A549 (cell line): ENCODE measurements at regions of chr10 and their contacts with region 1.

Region 1: GRCh38 chr10:93816123-93816747 is 58.5 kb downstream of the LGI1 start:
- DNase-seq: peak; percentile 46 to 54
- ATAC-seq: peak; percentile 70 to 83
- H3K4me3 ChIP-seq: no peak overlapping the region
- H3K27ac ChIP-seq: no peak overlapping the region
- H3K4me1 ChIP-seq: peaks cover 8% of the 10 kb centered on the region
- CTCF ChIP-seq: peak; percentile 73
- EP300 ChIP-seq: no peak
- POLR2A ChIP-seq: no peak
- RAD21 ChIP-seq: peak; percentile 62 to 68

Region 2: GRCh38 chr10:93680412-93681047 is 135.7 kb before region 1 on chr10:
- CTCF ChIA-PET with region 1: interaction called, 10 read pairs
- POLR2A ChIA-PET with region 1: no interaction called
- DNase-seq: peak; percentile 40 to 69
- ATAC-seq: peak; percentile 70 to 80; a peak in 5 of 6 replicates
- H3K4me3 ChIP-seq: no peak overlapping the region
- H3K27ac ChIP-seq: no peak overlapping the region
- H3K4me1 ChIP-seq: no peaks in the 10 kb centered on the region
- CTCF ChIP-seq: peak; percentile 89
- EP300 ChIP-seq: no peak
- POLR2A ChIP-seq: no peak
- RAD21 ChIP-seq: peak; percentile 91 to 92

Region 3: DNA sequence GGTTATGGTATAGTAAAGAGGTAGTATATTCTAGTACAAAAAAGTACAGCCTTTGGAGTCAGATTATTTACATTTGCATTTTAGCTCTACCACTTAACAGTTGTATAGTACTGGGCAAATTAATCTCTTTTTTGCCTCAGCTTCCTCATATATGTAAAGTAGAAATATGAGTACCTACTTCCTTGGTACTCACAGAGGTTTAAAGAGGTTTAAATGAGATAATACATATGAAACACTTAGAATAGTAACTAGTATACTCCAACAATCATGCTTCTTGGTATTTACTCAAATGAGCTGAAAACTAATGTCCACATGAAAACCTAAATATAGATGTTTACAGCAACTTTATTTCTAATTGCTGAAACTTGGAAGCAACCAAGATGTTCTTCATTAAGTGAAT is 128.5 kb before region 1 on chr10:
- CTCF ChIA-PET with region 1: interaction called, 3 read pairs
- POLR2A ChIA-PET with region 1: interaction called, 10 read pairs
- DNase-seq: no peak
- ATAC-seq: no peak
- H3K4me3 ChIP-seq: no peak overlapping the region
- H3K27ac ChIP-seq: no peak overlapping the region
- H3K4me1 ChIP-seq: no peaks in the 10 kb centered on the region
- CTCF ChIP-seq: no peak
- EP300 ChIP-seq: no peak
- POLR2A ChIP-seq: no peak
- RAD21 ChIP-seq: no peak

Region 4: DNA sequence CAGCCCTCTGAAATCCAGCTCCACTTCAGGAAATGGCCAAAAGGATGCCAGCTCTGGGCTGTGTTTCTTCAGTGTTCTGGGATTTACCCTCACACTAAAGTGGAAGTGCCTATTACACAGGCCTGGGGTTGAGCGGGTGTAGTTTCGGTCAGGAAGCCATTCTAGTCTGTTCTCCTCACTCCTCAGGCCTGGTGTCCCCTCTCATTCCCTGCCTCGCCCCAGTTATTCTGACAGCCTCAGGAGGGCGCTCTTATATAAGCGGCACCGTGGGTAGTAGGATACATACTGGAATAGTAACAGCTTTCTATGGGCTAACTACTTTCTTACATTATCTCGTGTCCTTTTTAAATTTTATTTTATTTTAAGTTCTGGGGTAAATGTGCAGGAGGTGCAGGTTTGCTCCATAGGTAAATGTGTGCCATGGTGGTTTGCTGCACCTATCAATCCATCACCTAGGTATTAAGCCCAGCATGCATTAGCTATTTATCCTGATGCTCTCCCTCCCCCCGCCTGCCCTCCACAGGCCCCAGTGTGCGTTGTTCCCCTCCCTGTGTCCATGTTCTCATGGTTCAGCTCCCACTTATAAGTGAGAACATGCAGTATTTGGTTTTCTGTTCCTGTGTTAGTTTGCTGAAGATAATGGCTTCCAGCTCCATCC is 70.7 kb before region 1 on chr10:
- CTCF ChIA-PET with region 1: interaction called, 14 read pairs
- POLR2A ChIA-PET with region 1: no interaction called
- DNase-seq: peak; percentile 32 to 44
- ATAC-seq: peak; percentile 65 to 88; a peak in 5 of 6 replicates
- H3K4me3 ChIP-seq: no peak overlapping the region
- H3K27ac ChIP-seq: no peak overlapping the region
- H3K4me1 ChIP-seq: peaks cover 6% of the 10 kb centered on the region; the same call in 2 of the 3 replicates
- CTCF ChIP-seq: peak; percentile 38; the same call in 2 of the 3 replicates
- EP300 ChIP-seq: no peak
- POLR2A ChIP-seq: no peak
- RAD21 ChIP-seq: peak in 1 of 2 experiments; percentile 63; a peak in 4 of 5 replicates

Region 5: DNA sequence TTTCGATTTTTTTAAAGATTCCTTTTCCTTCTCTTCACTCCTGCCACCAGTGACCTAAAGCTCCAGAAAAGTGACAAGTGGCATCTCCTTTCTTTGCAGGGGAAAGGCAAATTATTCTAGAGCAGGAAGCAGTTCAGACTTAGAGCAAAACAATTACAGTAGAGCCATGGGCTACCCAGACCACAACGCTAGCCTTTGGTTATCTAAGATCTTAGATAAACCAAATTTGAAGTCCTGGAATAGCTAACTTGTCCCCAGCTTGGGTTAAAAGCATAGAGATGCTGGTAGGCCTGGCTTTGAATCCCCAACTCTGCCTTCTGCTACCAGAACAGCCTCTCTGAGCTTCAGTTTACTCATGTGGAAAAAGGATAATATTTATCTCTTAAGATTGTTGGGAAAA is 20.1 kb before region 1 on chr10:
- CTCF ChIA-PET with region 1: interaction called, 65 read pairs
- POLR2A ChIA-PET with region 1: no interaction called
- DNase-seq: no peak
- ATAC-seq: no peak
- H3K4me3 ChIP-seq: no peak overlapping the region
- H3K27ac ChIP-seq: no peak overlapping the region
- H3K4me1 ChIP-seq: no peaks in the 10 kb centered on the region
- CTCF ChIP-seq: no peak
- EP300 ChIP-seq: no peak
- POLR2A ChIP-seq: no peak
- RAD21 ChIP-seq: no peak

Region 6: GRCh38 chr10:93865794-93866425 is 49.7 kb after region 1 on chr10:
- CTCF ChIA-PET with region 1: no interaction called
- POLR2A ChIA-PET with region 1: no interaction called
- DNase-seq: no peak
- ATAC-seq: no peak
- H3K4me3 ChIP-seq: no peak overlapping the region
- H3K27ac ChIP-seq: no peak overlapping the region
- H3K4me1 ChIP-seq: no peaks in the 10 kb centered on the region
- CTCF ChIP-seq: no peak
- EP300 ChIP-seq: no peak
- POLR2A ChIP-seq: no peak
- RAD21 ChIP-seq: no peak

Region 7: DNA sequence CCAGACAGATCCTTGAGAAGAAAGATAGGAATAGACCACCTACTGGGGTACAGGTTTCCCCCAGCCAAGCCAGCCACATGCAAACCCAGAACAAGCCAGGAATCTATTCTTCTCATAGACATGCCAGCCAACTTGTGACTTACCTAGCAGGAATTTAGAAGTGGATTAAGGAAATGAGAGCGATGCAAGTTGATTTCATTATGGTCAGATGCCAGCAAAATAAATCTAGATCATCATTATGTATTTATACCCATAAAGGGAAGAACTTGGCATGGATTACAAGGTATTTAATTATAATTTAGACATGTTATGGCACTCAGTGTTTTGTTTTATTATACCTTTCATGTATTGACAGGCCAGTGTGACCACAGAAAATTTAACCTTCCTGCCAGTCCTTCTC is 110.4 kb after region 1 on chr10:
- CTCF ChIA-PET with region 1: no interaction called
- POLR2A ChIA-PET with region 1: no interaction called
- DNase-seq: no peak
- ATAC-seq: no peak
- H3K4me3 ChIP-seq: no peak overlapping the region
- H3K27ac ChIP-seq: no peak overlapping the region
- H3K4me1 ChIP-seq: no peaks in the 10 kb centered on the region
- CTCF ChIP-seq: no peak
- EP300 ChIP-seq: no peak
- POLR2A ChIP-seq: no peak
- RAD21 ChIP-seq: no peak